ENCODE measurements at regions of chr21 and their contacts with region 1.

Region 1: DNA sequence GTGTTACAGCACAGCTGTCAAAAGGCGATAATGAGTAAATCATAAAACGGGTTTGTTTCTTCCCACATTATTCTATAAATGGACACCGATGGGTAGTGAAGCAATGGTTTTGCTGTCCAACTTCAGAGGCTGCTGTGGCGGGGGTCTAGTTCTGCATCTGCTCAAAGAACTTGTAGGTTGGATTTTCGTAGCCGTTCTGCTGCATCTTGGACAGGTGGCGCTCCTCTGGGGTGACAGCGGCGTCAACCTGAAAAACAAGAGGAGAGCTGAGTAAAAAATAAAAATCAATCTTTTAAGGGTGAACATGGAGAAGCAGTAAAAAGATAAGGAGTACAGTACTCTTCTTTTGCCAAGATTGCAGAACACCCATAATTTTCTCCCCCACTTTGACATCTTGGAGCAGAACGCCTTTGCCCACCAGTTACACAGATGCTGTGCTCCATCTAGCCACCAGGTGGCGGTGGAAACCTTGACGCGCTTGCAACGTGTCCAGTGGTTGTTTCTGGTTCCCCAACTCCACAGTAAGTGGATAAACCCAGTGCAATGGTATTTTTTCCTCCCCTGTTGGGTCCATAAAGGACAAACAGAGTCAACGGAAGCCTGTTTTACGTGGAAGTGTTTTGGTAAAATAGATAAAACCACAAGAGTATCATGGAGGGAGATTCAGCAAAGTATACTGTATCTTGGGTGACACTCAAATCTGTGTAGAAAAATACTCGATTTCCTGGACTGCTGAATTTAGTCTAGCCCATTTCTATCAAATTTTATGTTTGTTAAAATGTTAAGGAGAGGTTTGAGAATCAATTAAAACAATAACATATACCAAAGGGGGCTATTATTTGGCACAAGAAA is 147.0 kb downstream of the GABPA start:
- DNase-seq: peak; percentile 50
- H3K4me3 Mint-ChIP-seq: no peak overlapping the region
- H3K27ac Mint-ChIP-seq: no peak overlapping the region
- H3K4me1 Mint-ChIP-seq: no peaks in the 10 kb centered on the region
- H3K27me3 Mint-ChIP-seq: no peaks in the 10 kb centered on the region

Region 2: GRCh38 chr21:26032263-26032662 is 150.5 kb after region 1 on chr21:
- intact Hi-C with region 1: loop called (anchors 10 kb)
- DNase-seq: no peak
- H3K4me3 Mint-ChIP-seq: no peak overlapping the region
- H3K27ac Mint-ChIP-seq: no peak overlapping the region
- H3K4me1 Mint-ChIP-seq: peaks cover 14% of the 10 kb centered on the region
- H3K27me3 Mint-ChIP-seq: no peaks in the 10 kb centered on the region

Region 3: DNA sequence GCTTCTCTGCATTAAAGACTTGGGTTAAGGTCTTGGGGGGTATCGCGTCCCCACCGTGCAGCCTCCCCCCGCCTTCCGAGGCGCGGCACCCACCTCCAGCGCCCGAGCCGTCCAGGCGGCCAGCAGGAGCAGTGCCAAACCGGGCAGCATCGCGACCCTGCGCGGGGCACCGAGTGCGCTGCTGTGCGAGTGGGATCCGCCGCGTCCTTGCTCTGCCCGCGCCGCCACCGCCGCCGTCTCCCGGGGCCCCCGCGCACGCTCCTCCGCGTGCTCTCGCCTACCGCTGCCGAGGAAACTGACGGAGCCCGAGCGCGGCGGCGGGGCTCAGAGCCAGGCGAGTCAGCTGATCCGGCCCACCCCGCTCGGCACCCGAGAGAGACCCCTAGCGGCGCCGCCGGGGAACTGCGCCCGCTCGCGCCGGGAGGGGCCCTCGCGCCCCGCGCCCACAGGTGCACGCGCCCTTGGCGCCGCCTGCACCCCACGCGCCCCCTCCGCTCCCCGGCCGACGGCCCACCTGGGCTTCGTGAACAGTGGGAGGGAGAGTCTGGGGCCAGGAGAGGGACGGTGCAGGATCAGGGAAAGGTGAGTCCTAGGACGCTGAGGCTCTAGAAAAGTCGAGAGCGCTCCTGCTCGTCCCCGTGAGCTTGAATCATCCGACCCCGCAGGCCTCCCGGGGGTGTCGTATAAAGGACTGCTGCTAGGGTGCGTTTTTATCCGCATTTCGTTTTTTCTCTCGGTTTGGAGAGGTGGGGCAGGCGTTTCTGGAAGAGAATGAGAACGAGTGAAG is 288.9 kb after region 1 on chr21 and contains the start of gene APP:
- intact Hi-C with region 1: loop called (anchors 5 kb)
- DNase-seq: peak; percentile 86
- H3K4me3 Mint-ChIP-seq: peak within 1 kb of the TSS; percentile 94
- H3K27ac Mint-ChIP-seq: peak within 1 kb of the TSS; percentile 78
- H3K4me1 Mint-ChIP-seq: peaks cover 35% of the 10 kb centered on the region
- H3K27me3 Mint-ChIP-seq: peaks cover 6% of the 10 kb centered on the region
- total RNA-seq, gene APP: 85.7 and 86.5 TPM in 2 replicates

Region 4: GRCh38 chr21:26715878-26716506 is 834.2 kb after region 1 on chr21:
- intact Hi-C with region 1: loop called (anchors 1 kb)
- DNase-seq: no peak
- H3K4me3 Mint-ChIP-seq: no peak overlapping the region
- H3K27ac Mint-ChIP-seq: no peak overlapping the region
- H3K4me1 Mint-ChIP-seq: no peaks in the 10 kb centered on the region
- H3K27me3 Mint-ChIP-seq: no peaks in the 10 kb centered on the region